Activated T-helper 1 cell treated with anti-CD3 and anti-CD28 coated beads, Interleukin-12 subunit alpha, Interleukin-12 subunit beta, Interleukin-2, Interleukin-4 antibody, amounts not matched to agents 30 ng/mL and 10 ng/mL and 1 ng/mL, durations not matched to agents 14 hours and 24 hours and 36 hours (primary cell): ENCODE measurements at regions of chr17 and their contacts with region 1.

Region 1: GRCh38 chr17:8785547-8786413 is 13.4 kb downstream of the MFSD6L start:
- DNase-seq: peak; percentile 19
- H3K4me3 Mint-ChIP-seq: no peak overlapping the region
- H3K27ac Mint-ChIP-seq: no peak overlapping the region
- H3K4me1 Mint-ChIP-seq: no peaks in the 10 kb centered on the region
- H3K27me3 Mint-ChIP-seq: peaks cover 9% of the 10 kb centered on the region

Region 2: DNA sequence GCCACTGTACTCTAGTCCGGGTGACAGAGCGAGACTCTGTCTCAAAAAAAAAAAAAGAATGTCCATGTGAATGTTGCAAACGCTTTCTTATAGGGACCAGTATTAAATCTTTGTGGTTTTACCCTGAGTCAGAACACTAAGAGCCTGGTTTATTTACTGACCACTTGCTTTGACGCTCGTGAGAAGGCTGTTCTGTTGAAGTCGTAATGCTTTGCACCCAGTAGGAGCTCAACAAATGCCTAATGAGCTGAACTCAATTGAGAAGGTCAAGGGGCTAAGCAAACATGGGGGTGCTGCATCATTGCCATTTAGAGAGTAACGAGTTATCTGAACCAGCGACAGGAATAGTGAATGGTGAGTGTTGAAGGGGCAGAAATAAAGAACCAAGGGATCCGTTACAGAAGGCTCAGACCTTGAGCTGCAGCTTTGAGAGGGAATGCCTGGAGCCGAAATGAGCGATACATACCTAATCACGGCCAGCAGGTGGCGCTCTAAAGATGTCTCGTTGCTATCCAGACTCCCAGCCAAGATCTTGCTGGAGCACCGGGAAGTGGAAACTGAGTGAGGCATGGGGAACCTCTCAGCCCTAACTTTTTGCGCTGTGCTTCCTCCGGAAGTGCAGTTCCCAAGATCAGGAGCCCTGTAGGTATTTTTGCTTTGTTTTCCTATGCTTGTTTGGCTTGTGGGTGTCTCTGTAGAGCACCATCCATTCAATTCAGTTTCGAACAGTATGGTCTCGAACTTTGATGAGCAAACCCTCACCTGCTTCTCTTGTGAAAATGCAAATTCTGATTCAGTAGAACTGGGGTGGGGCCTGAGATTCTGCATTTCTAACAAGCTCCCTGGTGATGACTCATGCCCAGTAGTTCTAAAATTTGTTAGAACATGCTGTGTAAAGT is 375.6 kb before region 1 on chr17:
- intact Hi-C with region 1: loop called (anchors 1 kb)
- DNase-seq: peak; percentile 63
- H3K4me3 Mint-ChIP-seq: no peak overlapping the region
- H3K27ac Mint-ChIP-seq: no peak overlapping the region
- H3K4me1 Mint-ChIP-seq: peaks cover 22% of the 10 kb centered on the region
- H3K27me3 Mint-ChIP-seq: peaks cover 26% of the 10 kb centered on the region

Region 3: DNA sequence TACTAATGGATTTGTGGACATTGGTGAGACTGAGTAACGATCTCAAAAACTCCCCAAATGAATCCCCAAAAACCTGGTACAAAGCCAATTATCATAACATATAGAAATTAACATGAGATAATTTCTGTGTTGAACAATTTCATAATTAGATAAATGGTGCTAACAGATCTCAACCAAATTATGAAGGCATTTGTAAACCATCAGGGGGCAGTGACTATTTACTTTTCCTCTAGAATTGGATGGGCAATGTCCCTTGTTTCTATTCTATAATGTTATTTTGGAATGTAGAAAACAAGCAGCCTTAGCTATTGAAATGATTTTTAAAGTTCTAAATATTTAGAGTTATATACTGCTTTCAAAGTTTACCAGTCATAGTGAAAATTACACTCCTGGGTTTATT is 213.0 kb before region 1 on chr17:
- intact Hi-C with region 1: loop called (anchors 2 kb)
- DNase-seq: no peak
- H3K4me3 Mint-ChIP-seq: no peak overlapping the region
- H3K27ac Mint-ChIP-seq: no peak overlapping the region
- H3K4me1 Mint-ChIP-seq: no peaks in the 10 kb centered on the region
- H3K27me3 Mint-ChIP-seq: peaks cover 2% of the 10 kb centered on the region

Region 4: DNA sequence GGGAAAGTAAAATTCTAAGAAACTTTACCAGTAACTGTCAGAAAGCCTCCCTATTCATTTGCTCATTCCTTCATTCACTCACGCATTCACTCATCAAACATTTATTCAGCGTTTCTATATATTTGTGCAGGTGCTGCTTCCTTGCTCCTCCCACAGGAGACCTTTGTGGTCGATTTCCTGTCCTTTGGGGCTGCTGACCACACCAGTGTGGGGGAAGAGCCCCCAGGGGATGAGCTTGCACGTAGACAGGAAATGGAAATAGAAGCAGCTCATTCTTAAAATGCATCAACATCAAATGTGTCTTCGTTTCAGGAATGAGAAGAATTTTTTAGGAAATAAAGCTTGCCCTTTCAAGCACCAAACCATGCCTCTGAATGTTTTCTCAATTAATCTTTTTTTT is 72.1 kb after region 1 on chr17:
- intact Hi-C with region 1: loop called (anchors 5 kb)
- DNase-seq: peak; percentile 44
- H3K4me3 Mint-ChIP-seq: peak overlapping the region; percentile 73
- H3K27ac Mint-ChIP-seq: peak overlapping the region; percentile 94
- H3K4me1 Mint-ChIP-seq: peaks cover 60% of the 10 kb centered on the region
- H3K27me3 Mint-ChIP-seq: no peaks in the 10 kb centered on the region

Region 5: DNA sequence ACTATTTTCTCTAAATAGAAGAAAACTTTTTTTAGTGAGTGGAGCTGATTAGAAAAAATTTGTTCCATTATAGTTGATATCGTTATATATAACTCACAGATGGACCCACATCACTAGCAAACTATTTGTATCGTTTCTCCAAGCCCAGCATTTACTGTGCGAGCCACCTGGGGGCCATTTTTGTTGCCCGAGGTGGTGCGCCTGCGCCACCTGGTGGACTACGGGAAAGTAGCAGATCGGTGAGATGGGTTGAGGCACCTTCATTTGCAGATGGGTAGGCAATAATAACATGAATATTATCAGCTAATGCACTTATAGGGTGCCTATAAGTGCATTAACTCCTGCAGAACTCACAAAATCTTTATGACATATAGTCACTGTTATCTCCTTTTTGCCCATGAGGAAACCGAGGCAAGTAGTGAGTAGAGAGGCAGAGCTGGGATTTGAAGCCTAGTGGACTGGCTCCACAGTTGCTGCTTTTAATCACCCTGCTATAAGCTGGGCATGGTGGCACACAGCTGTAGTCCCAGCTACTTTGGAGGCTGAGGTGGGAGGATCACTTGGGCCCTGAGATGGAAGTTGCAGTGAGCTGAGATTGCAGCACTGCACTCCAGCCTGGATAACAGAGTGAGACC is 212.3 kb after region 1 on chr17:
- intact Hi-C with region 1: loop called (anchors 5 kb)
- DNase-seq: peak; percentile 67
- H3K4me3 Mint-ChIP-seq: no peak overlapping the region
- H3K27ac Mint-ChIP-seq: no peak overlapping the region
- H3K4me1 Mint-ChIP-seq: no peaks in the 10 kb centered on the region
- H3K27me3 Mint-ChIP-seq: peaks cover 35% of the 10 kb centered on the region